Calu3 (cell line): ENCODE measurements at regions of chr5 and their contacts with region 1.

Region 1: DNA sequence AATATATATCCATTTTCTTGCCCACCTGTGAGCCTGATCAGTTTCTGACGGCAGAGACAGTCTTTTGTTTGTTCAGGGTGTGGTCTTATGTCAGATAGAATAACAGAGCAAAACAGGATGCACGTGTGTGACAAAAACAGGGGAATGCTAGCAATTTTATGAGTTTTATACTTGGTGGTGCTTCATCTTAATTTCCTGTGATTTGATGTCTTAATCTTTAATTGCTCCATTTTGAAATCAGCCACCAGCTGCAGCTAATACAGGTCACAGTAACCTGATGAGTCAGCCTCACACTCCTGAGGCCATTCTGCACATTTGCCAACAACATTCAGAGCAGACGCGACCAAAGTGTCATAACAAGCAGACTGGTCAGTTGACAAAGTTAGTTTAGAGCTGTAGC is 42.3 kb upstream of the JMY start:
- DNase-seq: peak; percentile 30
- H3K4me3 Mint-ChIP-seq: no peak overlapping the region
- H3K27ac Mint-ChIP-seq: no peak overlapping the region
- H3K4me1 Mint-ChIP-seq: peaks cover 29% of the 10 kb centered on the region
- H3K27me3 Mint-ChIP-seq: no peaks in the 10 kb centered on the region
- CTCF ChIP-seq: no peak

Region 2: DNA sequence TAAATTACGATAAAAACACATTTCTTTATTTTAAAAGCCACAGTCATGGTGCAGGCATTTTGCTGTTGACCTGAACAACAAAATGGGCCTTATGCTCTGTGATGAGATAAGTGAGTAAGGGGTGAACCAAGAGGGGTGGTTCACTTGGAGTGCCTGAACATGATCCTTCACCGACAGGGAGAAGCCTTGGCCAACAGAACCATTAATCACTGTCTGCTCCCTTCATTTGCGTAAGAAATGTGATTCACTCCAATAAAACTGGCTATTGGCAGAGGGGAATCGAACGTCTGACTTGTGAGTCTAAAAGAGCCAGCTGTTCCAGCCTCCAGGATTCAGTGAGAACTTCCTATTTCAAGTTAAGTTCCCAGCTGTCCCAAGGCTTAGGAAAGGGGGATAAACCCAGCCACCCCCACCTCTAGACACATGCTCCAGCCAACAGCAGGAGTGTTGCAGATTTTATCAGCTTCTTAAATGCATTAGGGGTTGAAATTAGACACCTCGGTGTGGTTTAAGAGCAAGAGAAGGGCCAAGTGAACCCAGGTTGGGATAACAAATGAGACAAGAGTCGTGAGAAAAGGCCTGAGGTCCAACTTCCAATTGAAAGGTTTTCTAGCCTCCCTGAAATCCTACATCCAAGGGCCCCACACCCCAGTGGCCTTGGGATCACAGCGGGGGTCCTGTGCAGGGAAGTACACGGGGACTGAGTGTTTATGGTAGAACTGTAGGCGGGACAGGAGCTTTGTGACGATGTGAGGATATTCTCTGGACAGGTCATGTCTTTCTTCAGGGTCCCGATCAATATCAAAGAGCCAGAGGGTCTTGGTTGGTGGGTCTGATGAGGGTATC is 413.6 kb before region 1 on chr5:
- CTCF ChIA-PET with region 1: no interaction called
- intact Hi-C with region 1: no loop called
- DNase-seq: no peak
- H3K4me3 Mint-ChIP-seq: no peak overlapping the region
- H3K27ac Mint-ChIP-seq: no peak overlapping the region
- H3K4me1 Mint-ChIP-seq: no peaks in the 10 kb centered on the region
- H3K27me3 Mint-ChIP-seq: no peaks in the 10 kb centered on the region
- CTCF ChIP-seq: no peak

Region 3: GRCh38 chr5:79133657-79134451 is 59.8 kb before region 1 on chr5:
- CTCF ChIA-PET with region 1: no interaction called
- intact Hi-C with region 1: no loop called
- DNase-seq: peak; percentile 82
- H3K4me3 Mint-ChIP-seq: peak overlapping the region; percentile 64
- H3K27ac Mint-ChIP-seq: peak overlapping the region; percentile 93
- H3K4me1 Mint-ChIP-seq: peaks cover 18% of the 10 kb centered on the region
- H3K27me3 Mint-ChIP-seq: peaks cover 1% of the 10 kb centered on the region
- CTCF ChIP-seq: peak; percentile 58

Region 4: DNA sequence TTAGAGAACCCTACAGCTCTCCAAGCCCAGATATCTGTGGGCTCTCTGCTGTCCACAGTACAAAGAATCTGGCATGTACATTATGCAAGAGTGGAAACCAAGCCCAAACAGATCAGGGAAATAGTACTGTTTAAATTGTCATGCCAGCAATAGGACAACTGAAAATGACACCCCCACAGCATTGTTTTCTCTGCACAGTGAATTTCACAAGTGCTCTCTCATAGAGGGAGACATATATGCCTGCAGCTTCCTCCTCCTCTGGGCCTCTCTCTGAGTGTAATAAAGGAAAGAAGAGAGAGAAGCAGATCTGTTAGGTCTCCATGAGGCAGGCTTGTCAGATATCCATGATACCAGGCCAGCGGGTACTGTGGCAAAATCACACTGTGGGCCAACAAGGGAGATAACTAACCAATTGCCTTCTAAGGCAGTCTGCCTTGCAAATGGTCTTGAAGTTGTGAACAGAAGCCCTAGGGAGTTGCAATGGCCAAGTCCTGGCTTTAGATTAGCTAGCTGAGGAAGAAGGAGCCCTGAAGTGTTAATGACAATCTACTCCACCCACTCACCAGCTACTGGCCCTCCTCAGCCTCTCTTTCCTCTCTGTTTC is 12.1 kb before region 1 on chr5:
- CTCF ChIA-PET with region 1: interaction called, 4 read pairs
- intact Hi-C with region 1: loop called (anchors 1 kb)
- DNase-seq: no peak
- H3K4me3 Mint-ChIP-seq: no peak overlapping the region
- H3K27ac Mint-ChIP-seq: no peak overlapping the region
- H3K4me1 Mint-ChIP-seq: peaks cover 21% of the 10 kb centered on the region
- H3K27me3 Mint-ChIP-seq: no peaks in the 10 kb centered on the region
- CTCF ChIP-seq: no peak